ENCODE measurements at regions of chr6 and their contacts with region 1.

Region 1: DNA sequence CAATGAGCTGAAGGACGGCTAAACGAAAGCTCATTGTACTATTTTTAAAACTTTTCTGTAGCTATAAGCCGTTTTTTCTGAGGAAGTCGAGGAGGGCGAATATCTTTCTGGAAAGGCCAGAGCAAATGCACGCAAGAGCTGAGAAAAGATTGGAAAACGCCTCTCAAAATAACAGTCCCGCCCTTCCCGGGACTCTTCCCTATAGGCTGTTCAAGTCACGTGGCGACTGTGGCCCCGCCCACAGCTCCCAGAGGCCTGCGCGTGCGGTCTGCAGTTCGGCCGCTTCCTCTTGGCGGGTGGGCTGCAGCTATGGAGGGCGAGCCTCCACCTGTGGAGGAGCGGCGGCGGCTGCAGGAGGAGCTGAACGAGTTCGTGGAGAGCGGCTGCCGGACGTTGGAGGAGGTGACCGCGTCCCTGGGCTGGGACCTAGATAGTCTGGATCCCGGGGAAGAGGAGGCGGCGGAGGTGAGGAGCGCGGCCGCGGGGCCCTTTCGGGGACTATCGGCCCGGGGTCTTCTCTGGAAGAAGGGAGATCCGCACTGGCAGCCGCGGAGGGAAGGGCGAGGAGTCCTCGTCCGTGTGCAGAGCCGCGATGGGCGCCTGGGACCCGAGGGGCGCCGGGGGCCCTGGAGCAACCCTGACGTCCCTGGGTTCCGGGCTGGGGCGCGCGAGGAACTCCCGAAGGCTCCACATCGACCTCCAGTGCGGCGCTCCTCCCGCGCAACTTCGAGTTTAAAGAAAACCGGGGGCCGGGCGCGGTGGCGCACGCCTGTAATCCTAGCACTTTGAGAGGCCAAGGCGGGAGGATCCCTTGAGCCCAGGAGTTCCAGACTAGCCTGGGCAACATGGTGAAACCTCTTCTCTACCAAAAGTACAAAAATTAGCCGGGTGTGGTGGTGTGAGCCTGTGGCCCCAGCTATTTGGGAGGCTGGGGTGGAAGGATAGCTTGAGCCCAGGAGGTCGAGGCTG is at the start of gene SNRNP48:
- DNase-seq: peak; percentile 93
- ATAC-seq: peak; percentile 97
- H3K4me3 ChIP-seq: peak within 1 kb of the TSS; percentile 77 to 88 (median 86)
- H3K27ac ChIP-seq: peak within 1 kb of the TSS; percentile 64
- H3K4me1 ChIP-seq: peaks cover 34% of the 10 kb centered on the region
- H3K27me3 ChIP-seq: no peaks in the 10 kb centered on the region
- CTCF ChIP-seq: 0 out of 2 replicates have a peak, but pooled peaks have one; percentile 11
- EP300 ChIP-seq: no peak
- POLR2A ChIP-seq: peak; percentile 73 to 96; a peak in 3 of 4 replicates
- RAD21 ChIP-seq: no peak
- total RNA-seq, gene SNRNP48: 47.5 and 82.0 TPM in 2 replicates

Region 2: GRCh38 chr6:7479801-7480266 is 110.4 kb before region 1 on chr6:
- CTCF ChIA-PET with region 1: no interaction called
- POLR2A ChIA-PET with region 1: no interaction called
- in situ Hi-C with region 1: no loop called
- intact Hi-C with region 1: no loop called
- DNase-seq: no peak
- ATAC-seq: peak; percentile 39; the same call in 2 of the 3 replicates
- H3K4me3 ChIP-seq: no peak overlapping the region
- H3K27ac ChIP-seq: no peak overlapping the region
- H3K4me1 ChIP-seq: 0 out of 2 replicates have a peak, but pooled peaks cover 5% of the 10 kb centered on the region
- H3K27me3 ChIP-seq: peaks cover 1 to 7% of the 10 kb centered on the region in 2 experiments; a peak in 1 of 5 replicates
- CTCF ChIP-seq: no peak
- EP300 ChIP-seq: no peak
- POLR2A ChIP-seq: no peak
- RAD21 ChIP-seq: no peak

Region 3: GRCh38 chr6:7546896-7547295 is 43.3 kb before region 1 on chr6:
- CTCF ChIA-PET with region 1: no interaction called
- POLR2A ChIA-PET with region 1: interaction called, 23 read pairs
- in situ Hi-C with region 1: no loop called
- intact Hi-C with region 1: no loop called
- DNase-seq: no peak
- ATAC-seq: no peak
- H3K4me3 ChIP-seq: peak overlapping the region; percentile 41 to 100 (median 94); a peak in 5 of 6 replicates
- H3K27ac ChIP-seq: peak overlapping the region; percentile 90
- H3K4me1 ChIP-seq: peaks cover 76% of the 10 kb centered on the region
- H3K27me3 ChIP-seq: peaks cover 0 to 3% of the 10 kb centered on the region in 2 experiments; a peak in 1 of 5 replicates
- CTCF ChIP-seq: no peak
- EP300 ChIP-seq: no peak
- POLR2A ChIP-seq: no peak
- RAD21 ChIP-seq: no peak

Region 4: GRCh38 chr6:7628479-7628878 is 38.2 kb after region 1 on chr6:
- CTCF ChIA-PET with region 1: no interaction called
- POLR2A ChIA-PET with region 1: no interaction called
- in situ Hi-C with region 1: no loop called
- intact Hi-C with region 1: no loop called
- DNase-seq: no peak
- ATAC-seq: no peak
- H3K4me3 ChIP-seq: no peak overlapping the region
- H3K27ac ChIP-seq: no peak overlapping the region
- H3K4me1 ChIP-seq: no peaks in the 10 kb centered on the region
- H3K27me3 ChIP-seq: peaks cover 0 to 3% of the 10 kb centered on the region in 2 experiments; a peak in 2 of 5 replicates
- CTCF ChIP-seq: no peak
- EP300 ChIP-seq: no peak
- POLR2A ChIP-seq: no peak
- RAD21 ChIP-seq: no peak

Region 5: DNA sequence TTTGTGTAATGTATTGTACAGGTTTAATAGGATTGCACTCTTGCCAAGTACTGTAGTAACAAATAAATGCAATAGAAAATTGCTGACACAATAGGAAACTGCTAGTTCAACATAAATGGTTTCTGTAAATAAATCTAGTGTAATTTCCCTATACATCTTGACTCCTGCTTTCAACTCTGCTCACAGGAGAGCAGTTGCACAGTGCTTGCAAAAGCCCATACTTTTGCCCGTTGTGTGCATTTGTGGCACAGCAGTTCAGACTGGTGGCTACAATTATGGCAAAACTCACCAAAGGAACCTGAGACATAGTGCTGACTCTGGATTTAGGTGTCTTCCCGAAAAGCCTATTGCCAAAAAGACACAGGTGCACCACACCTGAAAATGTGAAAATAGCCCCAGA is 1798.4 kb after region 1 on chr6:
- CTCF ChIA-PET with region 1: no interaction called
- POLR2A ChIA-PET with region 1: no interaction called
- in situ Hi-C with region 1: no loop called
- intact Hi-C with region 1: no loop called
- DNase-seq: no peak
- ATAC-seq: no peak
- H3K4me3 ChIP-seq: no peak overlapping the region
- H3K27ac ChIP-seq: no peak overlapping the region
- H3K4me1 ChIP-seq: no peaks in the 10 kb centered on the region
- H3K27me3 ChIP-seq: no peaks in the 10 kb centered on the region
- CTCF ChIP-seq: no peak
- EP300 ChIP-seq: no peak
- POLR2A ChIP-seq: no peak
- RAD21 ChIP-seq: no peak